ENCODE measurements at regions of chr12 and their contacts with region 1.

Region 1: GRCh38 chr12:57846577-57847319 is at the start of gene CTDSP2:
- H3K4me3 ChIP-seq: peak within 1 kb of the TSS; percentile 96
- H3K27ac ChIP-seq: peak within 1 kb of the TSS; percentile 95
- H3K4me1 ChIP-seq: peaks cover 14% of the 10 kb centered on the region; the same call in 1 of the 2 replicates
- CTCF ChIP-seq: no peak

Region 2: DNA sequence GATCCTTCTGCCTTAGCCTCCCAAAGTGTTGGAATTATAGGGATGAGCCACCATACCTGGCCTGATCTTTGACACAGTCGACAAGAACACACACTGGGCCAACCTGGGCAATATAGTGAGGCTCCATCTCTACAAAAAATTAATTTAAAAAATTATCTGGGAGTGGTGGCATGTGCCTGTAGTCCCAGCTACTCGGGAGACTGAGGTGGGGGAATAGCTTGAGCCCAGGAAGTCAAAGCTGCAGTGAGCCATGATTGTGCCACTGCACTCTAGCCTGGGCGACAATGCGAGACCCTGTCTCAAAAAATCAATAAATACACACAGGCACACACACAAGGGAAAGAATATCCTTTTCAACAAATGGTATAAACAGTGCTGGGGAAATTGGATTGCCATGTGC is 158.9 kb before region 1 on chr12:
- CTCF ChIA-PET with region 1: no interaction called
- POLR2A ChIA-PET with region 1: no interaction called
- H3K4me3 ChIP-seq: no peak overlapping the region
- H3K27ac ChIP-seq: no peak overlapping the region
- H3K4me1 ChIP-seq: no peaks in the 10 kb centered on the region
- CTCF ChIP-seq: no peak

Region 3: DNA sequence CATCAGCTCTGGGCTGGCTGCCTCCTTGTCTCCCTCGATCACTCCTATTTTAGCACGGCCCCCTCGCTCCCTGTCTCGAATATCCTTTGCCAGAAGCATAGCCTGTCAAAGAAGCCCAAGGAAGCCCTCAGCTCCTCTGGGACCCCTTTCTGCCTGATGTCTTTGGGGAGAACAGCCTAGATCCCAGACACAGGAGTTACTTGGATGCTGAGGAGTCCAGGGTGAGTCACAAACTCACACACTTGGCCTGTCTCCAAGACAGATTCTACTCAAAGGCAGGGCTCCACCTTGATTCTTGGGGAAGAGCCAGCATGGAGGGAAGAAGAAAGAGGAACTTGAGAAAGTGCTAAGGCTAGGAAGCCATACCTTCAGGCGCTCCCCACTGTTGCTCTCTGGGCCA is 36.3 kb before region 1 on chr12:
- CTCF ChIA-PET with region 1: no interaction called
- POLR2A ChIA-PET with region 1: no interaction called
- H3K4me3 ChIP-seq: no peak overlapping the region
- H3K27ac ChIP-seq: no peak overlapping the region
- H3K4me1 ChIP-seq: no peaks in the 10 kb centered on the region
- CTCF ChIP-seq: no peak

Region 4: DNA sequence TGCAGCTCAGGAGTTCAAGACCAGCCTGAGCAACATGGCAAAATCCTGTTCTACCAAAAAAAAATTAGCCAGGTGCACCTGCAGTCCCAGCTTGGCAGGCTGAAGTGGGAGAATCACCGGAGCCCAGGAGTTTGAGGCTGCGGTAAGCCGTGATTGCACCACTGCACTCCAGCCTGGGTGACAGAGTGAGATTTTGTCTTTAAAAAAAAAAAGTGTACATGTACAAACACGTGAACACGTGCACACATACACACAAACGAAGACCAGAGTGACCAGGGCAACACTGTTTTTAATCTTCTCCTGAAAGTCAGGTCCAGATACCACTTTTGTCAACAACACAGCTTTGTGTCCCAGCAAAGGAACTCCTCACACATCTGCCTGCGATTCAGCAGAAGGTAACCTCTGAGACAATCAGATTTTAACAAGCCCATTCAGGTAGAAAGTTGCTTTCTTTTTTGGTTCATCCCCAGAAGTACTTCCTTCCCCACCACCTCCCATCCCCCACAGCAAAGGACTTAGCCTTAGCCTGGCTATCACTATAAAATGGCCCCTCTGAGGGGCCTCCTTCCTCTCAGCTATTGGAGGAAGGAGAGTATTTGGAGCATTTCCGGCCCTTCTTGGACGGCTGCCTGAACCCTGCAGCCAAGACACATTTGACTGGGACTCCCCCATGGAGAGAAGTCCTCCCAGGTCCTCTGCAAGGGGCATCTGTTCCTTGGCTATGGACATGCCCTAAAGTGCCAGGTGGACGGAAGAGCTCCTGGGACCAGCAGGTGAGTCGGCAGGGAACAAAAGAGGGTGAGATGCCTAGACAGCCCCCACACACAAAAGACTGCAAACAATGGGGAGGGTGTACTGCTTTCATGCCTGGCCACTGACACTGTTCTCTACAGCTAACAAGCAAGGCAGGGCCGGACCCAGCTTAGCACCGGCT is 10.0 kb before region 1 on chr12:
- CTCF ChIA-PET with region 1: interaction called, 5 read pairs
- POLR2A ChIA-PET with region 1: interaction called, 22 read pairs
- H3K4me3 ChIP-seq: no peak overlapping the region
- H3K27ac ChIP-seq: peak overlapping the region; percentile 12; the same call in 1 of the 2 replicates
- H3K4me1 ChIP-seq: peaks cover 46% of the 10 kb centered on the region
- CTCF ChIP-seq: no peak

Region 5: DNA sequence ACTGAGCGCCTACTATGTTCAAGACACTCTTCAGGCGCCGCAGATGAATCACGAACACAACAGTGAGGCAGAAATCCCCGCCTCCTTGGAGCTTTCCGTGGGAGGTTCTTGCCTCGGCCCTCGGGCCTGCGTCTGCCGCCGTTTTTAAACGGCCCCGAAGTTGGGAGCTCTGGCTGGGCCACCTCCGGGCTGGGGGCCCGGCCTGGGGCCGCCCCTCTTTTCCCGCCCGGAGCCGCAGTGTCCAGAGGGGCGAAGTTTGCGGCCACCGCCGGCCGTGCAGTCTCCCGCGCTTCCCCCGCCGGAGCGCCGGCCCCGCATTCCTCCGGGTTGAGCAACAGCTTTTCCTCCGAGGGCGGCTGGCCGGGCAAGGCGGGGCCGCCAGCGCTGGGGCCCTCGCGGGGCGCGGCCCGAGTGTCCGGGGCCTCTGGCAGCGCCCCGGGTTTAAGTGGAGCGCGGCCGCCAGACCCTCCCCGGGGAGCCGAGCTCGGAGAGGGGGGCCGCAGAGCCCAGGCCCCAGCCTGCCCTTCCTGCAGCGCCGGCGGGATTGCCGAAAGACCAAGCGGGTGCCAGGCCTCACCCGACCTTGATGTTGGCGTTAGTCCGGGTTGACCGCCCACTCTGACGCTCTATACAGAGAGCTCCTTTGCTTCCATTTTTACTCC is 18.5 kb after region 1 on chr12:
- CTCF ChIA-PET with region 1: interaction called, 5 read pairs
- POLR2A ChIA-PET with region 1: interaction called, 41 read pairs
- H3K4me3 ChIP-seq: peak overlapping the region; percentile 37
- H3K27ac ChIP-seq: peak overlapping the region; percentile 62; the same call in 1 of the 2 replicates
- H3K4me1 ChIP-seq: no peaks in the 10 kb centered on the region
- CTCF ChIP-seq: no peak

Region 6: GRCh38 chr12:57941165-57941894 is 94.6 kb after region 1 on chr12 and contains the start of gene ATP23:
- CTCF ChIA-PET with region 1: interaction called, 3 read pairs
- POLR2A ChIA-PET with region 1: interaction called, 19 read pairs
- H3K4me3 ChIP-seq: peak within 1 kb of the TSS; percentile 73
- H3K27ac ChIP-seq: peak within 1 kb of the TSS; percentile 75
- H3K4me1 ChIP-seq: 0 out of 2 replicates have a peak, but pooled peaks cover 2% of the 10 kb centered on the region
- CTCF ChIP-seq: no peak